Activated CD4-positive, alpha-beta T cell treated with anti-CD3 and anti-CD28 coated beads, Interleukin-2, amount 10 ng/mL, durations not matched to agents 24 days and 14 days (primary cell): ENCODE measurements at regions of chr10 and their contacts with region 1.

Region 1: GRCh38 chr10:110993024-110993693 is 73.8 kb downstream of the SHOC2 start:
- DNase-seq: peak; percentile 79
- H3K4me3 Mint-ChIP-seq: peak overlapping the region; percentile 66
- H3K27ac Mint-ChIP-seq: peak overlapping the region; percentile 18
- H3K4me1 Mint-ChIP-seq: peaks cover 21% of the 10 kb centered on the region
- H3K27me3 Mint-ChIP-seq: no peaks in the 10 kb centered on the region

Region 2: GRCh38 chr10:110746254-110746826 is 246.8 kb before region 1 on chr10:
- intact Hi-C with region 1: no loop called
- DNase-seq: peak; percentile 84
- H3K4me3 Mint-ChIP-seq: no peak overlapping the region
- H3K27ac Mint-ChIP-seq: no peak overlapping the region
- H3K4me1 Mint-ChIP-seq: peaks cover 43% of the 10 kb centered on the region
- H3K27me3 Mint-ChIP-seq: no peaks in the 10 kb centered on the region

Region 3: DNA sequence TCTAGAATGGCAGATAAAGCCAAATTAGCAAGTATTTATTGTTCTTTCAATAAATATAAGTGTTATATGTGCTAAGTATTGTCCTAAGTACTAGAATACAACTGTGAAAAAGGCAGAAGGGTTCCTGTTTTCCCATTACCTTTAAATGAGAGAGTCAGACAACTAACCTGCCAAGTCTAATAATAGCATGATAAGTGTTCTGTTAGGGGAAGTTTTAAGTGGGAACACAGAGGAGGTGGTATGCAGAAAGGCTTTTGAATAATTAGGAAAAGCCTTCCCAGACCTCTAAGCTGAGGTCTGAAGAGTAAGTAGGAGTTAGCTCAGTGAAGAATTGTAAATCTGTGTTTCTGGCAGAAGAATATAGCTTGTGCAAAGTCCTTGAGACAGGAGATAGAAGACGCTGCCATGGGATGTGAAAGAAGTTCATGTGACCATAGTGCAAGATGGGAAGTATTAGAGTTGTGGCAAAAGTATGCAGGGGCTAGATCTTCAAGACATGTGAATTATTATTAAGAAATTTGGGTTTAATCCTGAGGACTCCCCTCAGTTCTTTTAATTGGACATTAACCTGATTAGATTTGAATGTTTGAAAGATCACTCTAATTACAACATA is 61.3 kb before region 1 on chr10:
- intact Hi-C with region 1: no loop called
- DNase-seq: no peak
- H3K4me3 Mint-ChIP-seq: no peak overlapping the region
- H3K27ac Mint-ChIP-seq: no peak overlapping the region
- H3K4me1 Mint-ChIP-seq: peaks cover 8% of the 10 kb centered on the region
- H3K27me3 Mint-ChIP-seq: no peaks in the 10 kb centered on the region

Region 4: GRCh38 chr10:110959379-110960332 is 33.5 kb before region 1 on chr10:
- intact Hi-C with region 1: no loop called
- DNase-seq: no peak
- H3K4me3 Mint-ChIP-seq: no peak overlapping the region
- H3K27ac Mint-ChIP-seq: no peak overlapping the region
- H3K4me1 Mint-ChIP-seq: peaks cover 1% of the 10 kb centered on the region
- H3K27me3 Mint-ChIP-seq: no peaks in the 10 kb centered on the region

Region 5: DNA sequence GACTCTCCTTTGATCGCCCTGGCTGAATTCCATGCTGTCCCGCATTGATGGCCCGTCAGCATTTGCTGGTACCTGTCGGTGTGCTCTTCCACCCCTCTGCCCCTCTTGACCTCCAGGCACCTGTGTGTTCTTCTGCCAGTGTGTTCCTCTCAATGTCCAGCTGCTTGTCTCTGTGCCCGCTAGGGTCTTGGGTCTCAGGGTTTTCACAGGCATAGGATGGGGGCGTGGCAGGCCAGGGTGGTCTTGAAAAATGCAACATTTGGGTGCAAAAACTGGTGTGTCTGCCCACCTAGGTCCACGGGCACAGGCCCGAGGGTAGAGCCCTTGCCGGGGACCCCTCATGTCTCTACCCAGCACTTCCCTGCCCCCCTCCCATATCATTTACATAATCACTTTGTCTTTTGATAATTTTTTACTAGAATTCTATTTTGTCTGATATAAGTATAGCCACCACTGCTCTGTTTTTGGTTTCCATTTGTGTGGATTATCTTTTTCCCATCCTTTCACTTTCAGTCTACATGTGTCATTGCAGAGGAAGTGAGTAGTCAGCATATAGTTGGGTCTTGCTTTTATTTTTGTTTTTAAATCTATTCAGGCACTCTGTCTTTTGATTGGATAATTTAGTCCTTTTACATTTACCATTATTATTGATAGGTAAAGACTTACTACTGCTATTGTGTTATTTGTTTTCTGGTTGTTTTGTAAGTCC is 37.0 kb after region 1 on chr10:
- intact Hi-C with region 1: loop called (anchors 5 kb)
- DNase-seq: no peak
- H3K4me3 Mint-ChIP-seq: no peak overlapping the region
- H3K27ac Mint-ChIP-seq: no peak overlapping the region
- H3K4me1 Mint-ChIP-seq: peaks cover 9% of the 10 kb centered on the region
- H3K27me3 Mint-ChIP-seq: no peaks in the 10 kb centered on the region